Heart left ventricle (tissue), 16 donors: ENCODE measurements at regions of chr11 and their contacts with region 1.

Region 1: DNA sequence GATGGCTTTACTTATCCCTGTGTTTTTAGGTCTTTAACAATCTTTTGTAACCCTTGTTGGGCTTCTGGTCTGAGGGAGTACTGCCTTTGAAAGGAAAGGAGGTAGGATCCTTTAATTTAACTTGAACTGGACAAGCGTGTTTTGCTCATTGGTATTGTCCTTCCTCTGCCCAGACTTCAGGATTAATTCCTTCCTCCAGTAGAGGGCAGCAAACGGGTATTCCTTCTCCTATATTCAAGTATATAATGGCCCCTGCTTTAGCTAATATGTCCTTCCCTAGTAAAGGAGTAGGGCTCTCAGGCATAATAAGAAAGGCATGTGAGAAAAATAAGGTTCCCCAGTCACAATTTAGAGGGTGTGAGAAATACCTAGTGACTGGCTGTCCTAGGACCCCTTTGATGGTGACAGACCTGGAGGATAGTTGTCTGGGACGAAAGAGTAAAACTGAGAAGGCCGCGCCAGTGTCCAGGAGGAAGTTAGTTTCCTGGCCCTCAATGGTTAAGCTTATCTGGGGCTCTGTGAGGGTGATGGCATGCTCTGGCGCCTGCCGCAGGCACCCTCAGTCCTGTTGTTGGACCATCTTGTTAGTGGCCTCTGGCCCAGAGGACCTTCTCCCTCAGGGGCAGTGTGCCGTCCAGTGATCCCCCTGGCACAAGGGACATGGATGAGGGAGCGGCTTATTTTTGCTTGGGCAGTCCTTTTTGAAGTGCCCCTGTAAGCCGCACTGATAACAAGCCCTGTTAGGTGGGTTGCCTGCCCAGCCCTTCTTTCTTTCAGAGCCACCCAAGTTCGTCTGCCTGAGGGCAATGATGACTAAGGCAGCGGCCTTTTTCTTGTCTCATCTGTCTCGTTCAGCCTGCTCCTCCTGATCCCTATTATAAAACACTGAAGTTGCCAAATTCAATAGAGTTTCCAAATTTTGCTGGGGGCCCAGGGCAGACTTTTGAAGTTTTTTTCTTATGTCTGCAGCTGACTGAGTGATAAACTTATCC is 51.8 kb downstream of the C11orf71 start:
- DNase-seq: peak in 2 of 5 donors; percentile 25 to 34
- ATAC-seq: peak in 3 of 4 donors; percentile 69 to 77 (median 72)
- H3K4me3 ChIP-seq: no peak overlapping the region
- H3K27ac ChIP-seq: no peak overlapping the region
- H3K4me1 ChIP-seq: peaks cover 0 to 3% (median 0%) of the 10 kb centered on the region in 12 donors
- H3K27me3 ChIP-seq: no peaks in the 10 kb centered on the region
- CTCF ChIP-seq: peak; percentile 41 to 73 (median 57)
- POLR2A ChIP-seq: no peak

Region 2: DNA sequence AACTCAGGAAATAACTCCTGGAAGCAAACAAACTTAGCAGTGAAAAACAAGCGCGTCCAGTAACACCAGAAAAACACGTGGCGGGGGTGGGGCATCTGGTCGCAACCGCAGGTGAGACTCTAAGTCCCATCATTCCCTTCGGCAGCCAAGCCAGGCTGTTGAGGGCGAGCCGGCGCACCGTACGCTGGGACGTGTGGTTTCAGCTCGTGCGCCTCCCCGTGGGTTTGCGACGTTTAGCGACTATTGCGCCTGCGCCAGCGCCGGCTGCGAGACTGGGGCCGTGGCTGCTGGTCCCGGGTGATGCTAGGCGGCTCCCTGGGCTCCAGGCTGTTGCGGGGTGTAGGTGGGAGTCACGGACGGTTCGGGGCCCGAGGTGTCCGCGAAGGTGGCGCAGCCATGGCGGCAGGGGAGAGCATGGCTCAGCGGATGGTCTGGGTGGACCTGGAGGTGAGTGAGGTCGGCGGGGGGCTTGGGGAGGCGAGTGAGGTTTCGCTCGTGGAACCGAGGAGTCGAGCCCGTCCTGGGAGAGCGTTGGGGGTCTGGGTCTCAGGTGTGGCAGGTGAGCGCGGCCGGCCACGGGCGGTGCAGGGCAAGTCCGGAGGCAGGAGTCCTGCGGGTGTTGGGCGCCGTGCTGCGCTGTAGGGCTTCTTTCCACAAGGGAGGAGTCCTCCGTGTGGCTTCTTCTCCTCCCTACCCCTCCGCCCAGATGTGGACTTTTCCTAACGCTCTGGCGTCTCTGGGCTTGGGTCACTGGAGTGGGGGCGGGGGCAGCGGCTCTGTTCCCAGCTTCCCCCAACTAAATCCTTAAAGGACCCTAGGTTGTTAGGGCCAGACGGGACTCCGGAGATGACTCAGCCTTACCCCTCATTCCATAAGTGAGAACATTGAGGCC is 91.0 kb after region 1 on chr11 and contains the start of gene REXO2:
- intact Hi-C with region 1: loop called in 3 of 10 experiments (anchors 2 to 10 kb)
- DNase-seq: peak; percentile 95 to 98 (median 97)
- ATAC-seq: peak; percentile 98 to 99 (median 98)
- H3K4me3 ChIP-seq: peak within 1 kb of the TSS; percentile 66 to 96 (median 88)
- H3K27ac ChIP-seq: peak within 1 kb of the TSS; percentile 35 to 95 (median 88)
- H3K4me1 ChIP-seq: peaks cover 0 to 43% (median 21%) of the 10 kb centered on the region in 12 donors
- H3K27me3 ChIP-seq: no peaks in the 10 kb centered on the region
- CTCF ChIP-seq: peak in 8 of 12 donors; percentile 9 to 62 (median 28)
- POLR2A ChIP-seq: peak in 1 of 2 donors; percentile 85
- total RNA-seq, gene REXO2: 158 to 235 (median 195) TPM

Region 3: GRCh38 chr11:114762408-114762807 is 413.9 kb after region 1 on chr11:
- intact Hi-C with region 1: loop called in 7 of 10 experiments (anchors 2 to 10 kb)
- DNase-seq: peak; percentile 41 to 74 (median 59)
- ATAC-seq: peak in 3 of 4 donors; percentile 85 to 88 (median 85)
- H3K4me3 ChIP-seq: no peak overlapping the region
- H3K27ac ChIP-seq: no peak overlapping the region
- H3K4me1 ChIP-seq: no peaks in the 10 kb centered on the region
- H3K27me3 ChIP-seq: no peaks in the 10 kb centered on the region
- CTCF ChIP-seq: peak; percentile 54 to 81 (median 68)
- POLR2A ChIP-seq: no peak